PC-9 (cell line): ENCODE measurements at regions of chr6 and their contacts with region 1.

Region 1: DNA sequence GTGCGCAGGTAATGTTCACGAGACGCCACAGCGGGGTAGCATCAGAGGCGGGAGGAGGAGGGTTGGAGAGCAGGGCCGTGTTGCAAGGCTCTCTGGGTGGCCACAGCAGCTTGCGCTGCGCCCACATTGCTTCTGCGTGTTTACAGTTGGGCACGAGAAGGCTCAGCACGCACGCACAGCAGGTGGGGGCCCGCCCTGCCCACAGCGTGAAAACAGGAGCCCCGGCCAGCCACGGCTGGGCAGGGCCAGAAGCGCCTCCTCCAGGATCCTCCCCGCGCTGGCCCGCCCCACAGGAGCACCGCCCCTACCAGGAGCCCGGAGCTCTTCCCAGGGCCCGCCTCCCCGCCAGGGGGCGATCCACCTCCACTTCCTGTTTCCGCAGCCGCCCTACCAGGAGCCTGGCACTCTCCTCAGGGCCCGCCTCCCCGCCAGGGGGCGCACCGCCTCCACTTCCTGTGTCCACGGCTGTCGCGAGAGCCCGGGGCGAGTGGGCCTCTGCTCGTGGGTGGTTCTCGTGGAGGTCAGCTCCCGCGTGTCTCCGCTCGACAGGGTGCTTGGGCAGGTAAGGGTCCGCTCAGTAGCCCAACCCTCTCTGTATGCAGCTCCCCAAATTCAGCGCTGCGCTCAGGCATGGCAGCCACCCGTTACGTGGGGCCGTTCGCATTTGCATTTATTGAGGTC is at the start of gene FAM50B:
- DNase-seq: peak; percentile 66 to 96
- H3K4me3 ChIP-seq: peak within 1 kb of the TSS; percentile 54
- H3K27ac ChIP-seq: peak within 1 kb of the TSS; percentile 69
- H3K4me1 ChIP-seq: peaks cover 4% of the 10 kb centered on the region; the same call in 1 of the 2 replicates
- H3K27me3 ChIP-seq: no peaks in the 10 kb centered on the region
- CTCF ChIP-seq: peak; percentile 83
- total RNA-seq, gene FAM50B: 14.3 and 16.3 TPM in 2 replicates

Region 2: DNA sequence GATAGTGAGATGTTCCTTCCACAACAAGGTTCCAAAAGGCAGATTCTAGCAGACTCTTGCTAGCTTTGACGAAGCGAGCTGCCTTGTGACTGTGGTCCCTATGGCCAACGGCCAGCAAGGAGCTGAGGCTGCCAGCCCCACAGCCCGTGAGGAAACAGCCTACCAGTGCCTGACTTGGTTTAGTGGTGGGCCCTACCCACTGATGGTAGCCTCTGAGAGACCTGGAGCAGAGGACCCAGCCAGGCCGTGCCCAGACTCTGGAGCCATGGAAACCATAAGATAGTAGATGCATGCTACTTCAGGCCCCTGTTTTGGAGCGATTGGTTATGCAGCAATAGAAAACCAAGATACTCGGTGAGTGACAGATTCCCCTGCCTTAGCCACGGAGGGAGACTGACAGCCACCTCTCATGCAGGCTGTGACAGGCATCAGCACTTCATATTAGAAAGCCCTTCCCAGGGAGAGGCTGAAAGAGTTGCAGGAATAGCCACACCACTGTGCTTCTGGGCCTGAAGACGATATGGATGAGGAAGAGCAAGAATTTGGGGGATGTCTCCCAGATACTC is 571.1 kb before region 1 on chr6:
- CTCF ChIA-PET with region 1: no interaction called
- POLR2A ChIA-PET with region 1: no interaction called
- intact Hi-C with region 1: loop called (anchors 5 kb)
- DNase-seq: no peak
- H3K4me3 ChIP-seq: no peak overlapping the region
- H3K27ac ChIP-seq: no peak overlapping the region
- H3K4me1 ChIP-seq: no peaks in the 10 kb centered on the region
- H3K27me3 ChIP-seq: no peaks in the 10 kb centered on the region
- CTCF ChIP-seq: no peak

Region 3: GRCh38 chr6:3750317-3751120 is 98.5 kb before region 1 on chr6:
- CTCF ChIA-PET with region 1: interaction called, 3 read pairs
- POLR2A ChIA-PET with region 1: interaction called, 3 read pairs
- intact Hi-C with region 1: loop called (anchors 1 kb)
- DNase-seq: peak; percentile 37 to 74
- H3K4me3 ChIP-seq: peak overlapping the region; percentile 69
- H3K27ac ChIP-seq: 0 out of 2 replicates have a peak overlapping the region, but pooled peaks have one; percentile 26
- H3K4me1 ChIP-seq: 0 out of 2 replicates have a peak, but pooled peaks cover 5% of the 10 kb centered on the region
- H3K27me3 ChIP-seq: no peaks in the 10 kb centered on the region
- CTCF ChIP-seq: no peak

Region 4: DNA sequence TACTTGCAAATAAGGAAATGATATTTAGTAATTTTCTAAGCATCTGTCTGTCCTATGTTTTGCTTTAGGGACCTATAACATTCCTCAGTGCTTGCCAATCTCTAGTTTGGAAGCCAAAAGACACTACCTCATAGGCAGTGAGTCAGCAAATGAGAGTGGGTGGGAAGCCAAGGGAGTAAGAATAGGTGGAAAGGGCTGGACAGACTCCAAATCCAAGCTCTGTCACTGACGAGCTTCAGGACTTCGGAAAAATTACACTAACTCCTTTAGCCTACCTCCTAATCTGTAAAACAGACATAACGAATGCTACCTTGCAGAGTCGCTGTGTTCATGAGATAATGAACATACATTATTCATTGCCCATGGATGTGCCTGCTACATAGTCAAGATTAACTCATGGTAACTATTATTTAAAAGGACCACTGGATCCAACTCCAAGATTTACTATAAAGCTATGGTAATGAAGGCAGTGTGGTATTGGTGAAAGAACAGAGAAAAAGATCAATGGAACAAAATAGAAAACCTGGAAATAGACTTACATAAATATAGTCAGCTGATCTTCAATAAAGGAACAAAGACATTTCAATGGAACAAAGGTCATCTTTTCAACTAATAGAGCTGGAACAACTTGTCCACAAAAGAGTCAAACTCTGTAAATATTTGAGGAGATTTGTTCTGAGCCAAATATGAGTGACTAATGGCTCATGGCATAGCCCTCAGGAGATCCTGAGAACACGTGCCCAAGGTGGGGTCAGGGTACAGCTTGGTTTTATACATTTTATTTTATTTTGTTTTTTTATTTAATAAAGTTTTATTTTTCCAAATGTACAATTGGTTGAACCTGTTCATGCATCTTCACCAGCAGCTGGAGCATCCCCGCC is 64.3 kb after region 1 on chr6:
- CTCF ChIA-PET with region 1: interaction called, 9 read pairs
- POLR2A ChIA-PET with region 1: no interaction called
- intact Hi-C with region 1: loop called (anchors 1 kb)
- DNase-seq: peak; percentile 74 to 95
- H3K4me3 ChIP-seq: peak overlapping the region; percentile 49; the same call in 1 of the 2 replicates
- H3K27ac ChIP-seq: peak overlapping the region; percentile 100
- H3K4me1 ChIP-seq: peaks cover 45% of the 10 kb centered on the region
- H3K27me3 ChIP-seq: no peaks in the 10 kb centered on the region
- CTCF ChIP-seq: no peak

Region 5: DNA sequence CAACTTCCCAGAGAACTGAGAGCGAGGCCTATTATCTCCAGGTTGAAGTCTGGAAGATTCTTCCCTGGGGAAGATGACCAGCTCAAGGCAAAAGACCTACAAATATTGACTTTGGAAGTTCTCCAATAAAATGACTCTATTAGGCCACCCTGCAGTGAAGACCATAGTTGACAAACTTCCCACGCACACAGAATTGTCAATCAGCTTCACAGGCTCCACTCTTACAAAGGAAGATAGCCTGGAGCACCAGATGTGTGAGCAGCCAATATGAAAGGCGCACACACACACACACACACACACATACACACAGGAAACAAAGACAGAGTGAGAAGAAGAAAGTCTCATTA is 113.9 kb after region 1 on chr6:
- CTCF ChIA-PET with region 1: no interaction called
- POLR2A ChIA-PET with region 1: no interaction called
- intact Hi-C with region 1: no loop called
- DNase-seq: no peak
- H3K4me3 ChIP-seq: no peak overlapping the region
- H3K27ac ChIP-seq: no peak overlapping the region
- H3K4me1 ChIP-seq: no peaks in the 10 kb centered on the region
- H3K27me3 ChIP-seq: no peaks in the 10 kb centered on the region
- CTCF ChIP-seq: no peak

Region 6: DNA sequence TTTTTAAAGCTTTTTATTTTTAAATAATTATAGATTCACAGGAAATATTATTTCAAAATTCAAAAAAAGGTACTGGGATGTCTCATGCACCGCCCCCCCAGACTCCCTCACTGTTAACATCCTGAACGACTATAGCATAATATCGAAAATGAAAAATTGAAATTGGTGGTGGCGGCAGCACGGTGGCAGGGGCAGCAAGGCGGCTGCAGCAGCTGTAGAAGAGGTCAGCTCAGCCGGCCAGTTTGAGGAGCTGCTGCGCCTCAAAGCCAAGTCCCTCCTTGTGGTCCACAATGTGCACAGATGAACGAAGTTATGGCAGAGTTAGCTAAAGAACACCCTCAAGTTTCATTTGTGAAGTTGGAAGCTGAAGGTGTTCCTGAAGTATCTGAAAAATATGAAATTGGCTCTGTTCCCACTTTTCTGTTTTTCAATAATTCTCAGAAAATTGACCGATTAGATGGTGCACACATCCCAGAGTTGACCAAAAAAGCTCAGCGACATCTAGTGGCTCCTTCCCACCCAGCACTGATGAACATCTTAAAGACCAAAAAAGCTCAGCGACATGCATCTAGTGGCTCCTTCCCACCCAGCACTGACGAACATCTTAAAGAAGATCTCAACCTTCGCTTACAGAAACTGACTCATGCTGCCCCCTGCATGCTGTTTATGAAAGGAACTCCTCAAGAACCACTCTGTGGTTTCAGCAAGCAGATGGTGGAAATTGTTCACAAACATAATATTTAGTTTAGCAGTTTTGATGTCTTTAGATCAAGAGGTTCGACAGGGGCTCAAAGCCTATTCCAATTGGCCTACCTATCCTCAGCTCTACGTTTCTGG is 129.0 kb after region 1 on chr6:
- CTCF ChIA-PET with region 1: interaction called, 11 read pairs
- POLR2A ChIA-PET with region 1: no interaction called
- intact Hi-C with region 1: loop called (anchors 1 kb)
- DNase-seq: peak; percentile 43 to 65
- H3K4me3 ChIP-seq: no peak overlapping the region
- H3K27ac ChIP-seq: no peak overlapping the region
- H3K4me1 ChIP-seq: no peaks in the 10 kb centered on the region
- H3K27me3 ChIP-seq: no peaks in the 10 kb centered on the region
- CTCF ChIP-seq: peak; percentile 73

Region 7: GRCh38 chr6:4008324-4009047 is 159.4 kb after region 1 on chr6:
- CTCF ChIA-PET with region 1: no interaction called
- POLR2A ChIA-PET with region 1: no interaction called
- intact Hi-C with region 1: loop called (anchors 2 kb)
- DNase-seq: peak in 1 of 2 experiments; percentile 75
- H3K4me3 ChIP-seq: no peak overlapping the region
- H3K27ac ChIP-seq: peak overlapping the region; percentile 54
- H3K4me1 ChIP-seq: peaks cover 5% of the 10 kb centered on the region
- H3K27me3 ChIP-seq: no peaks in the 10 kb centered on the region
- CTCF ChIP-seq: peak; percentile 70